HEK293 (cell line): ENCODE measurements at regions of chr10 and their contacts with region 1.

Region 1: DNA sequence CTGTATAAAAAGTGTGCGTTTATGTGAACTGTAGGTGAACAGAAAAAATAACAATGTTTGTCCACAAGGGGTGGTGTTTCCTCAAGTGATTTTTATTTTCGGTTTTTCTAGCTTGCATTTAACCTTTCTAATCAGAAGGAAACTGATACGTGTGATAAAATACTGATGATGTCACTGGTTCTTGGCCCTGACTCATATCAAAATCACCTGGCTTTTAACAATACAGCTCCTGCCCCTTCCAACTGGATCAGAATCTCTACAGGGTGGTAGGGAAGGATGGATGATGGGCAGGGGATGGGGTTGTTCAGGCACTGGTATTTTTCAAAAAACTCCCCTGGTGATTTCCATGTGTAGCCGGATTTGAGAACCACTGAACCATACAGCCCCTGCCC is 10.9 kb downstream of the NPFFR1 start:
- H3K4me3 ChIP-seq: no peak overlapping the region
- H3K27ac ChIP-seq: no peak overlapping the region
- H3K4me1 ChIP-seq: no peaks in the 10 kb centered on the region
- CTCF ChIP-seq: no peak

Region 2: DNA sequence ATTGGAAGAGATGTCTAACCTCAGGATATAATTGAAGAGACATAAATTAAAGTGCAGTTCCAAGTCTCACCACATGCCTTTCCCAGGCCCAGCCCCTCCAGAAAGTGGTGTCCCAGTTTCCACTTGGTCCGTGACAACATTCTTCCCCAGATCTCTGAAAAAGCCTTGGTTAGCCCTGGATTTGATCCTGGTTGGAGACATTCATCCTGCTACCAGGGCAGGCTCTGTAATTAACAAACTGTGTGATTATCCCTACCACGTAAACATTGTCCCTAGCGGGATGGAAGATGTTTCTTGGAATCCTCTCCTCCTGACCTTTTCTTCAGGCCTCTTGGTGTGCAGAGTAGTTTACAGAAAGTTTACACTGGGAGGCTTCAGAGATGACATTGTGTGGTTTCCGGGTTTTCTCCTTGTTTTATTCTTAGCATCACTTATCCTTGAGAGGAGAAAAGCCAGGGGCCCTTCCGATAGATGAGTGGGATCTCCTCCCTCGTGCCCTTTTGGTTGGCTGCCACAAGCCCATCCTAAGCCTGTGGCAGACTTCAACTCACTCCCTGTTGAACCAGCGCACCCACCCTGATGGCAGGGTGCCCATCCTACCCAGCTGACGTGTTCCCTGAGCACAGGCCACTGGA is 387.4 kb before region 1 on chr10:
- CTCF ChIA-PET with region 1: no interaction called
- POLR2A ChIA-PET with region 1: no interaction called
- H3K4me3 ChIP-seq: no peak overlapping the region
- H3K27ac ChIP-seq: no peak overlapping the region
- H3K4me1 ChIP-seq: no peaks in the 10 kb centered on the region
- CTCF ChIP-seq: no peak; the same call in 1 of the 2 replicates

Region 3: GRCh38 chr10:70293169-70293813 is 20.4 kb after region 1 on chr10:
- CTCF ChIA-PET with region 1: interaction called, 10 read pairs
- POLR2A ChIA-PET with region 1: no interaction called
- H3K4me3 ChIP-seq: no peak overlapping the region
- H3K27ac ChIP-seq: no peak overlapping the region
- H3K4me1 ChIP-seq: no peaks in the 10 kb centered on the region
- CTCF ChIP-seq: no peak